Ovary (tissue), 10 donors: ENCODE measurements at regions of chr14 and their contacts with region 1.

Region 1: GRCh38 chr14:21092273-21093011 is 6.0 kb downstream of the ZNF219 start:
- DNase-seq: peak; percentile 73 to 92 (median 89)
- H3K4me3 ChIP-seq: no peak overlapping the region
- H3K27ac ChIP-seq: no peak overlapping the region
- H3K4me1 ChIP-seq: no peaks in the 10 kb centered on the region
- H3K27me3 ChIP-seq: no peaks in the 10 kb centered on the region
- CTCF ChIP-seq: peak; percentile 99 to 100 (median 100)
- EP300 ChIP-seq: no peak
- POLR2A ChIP-seq: peak; percentile 53

Region 2: GRCh38 chr14:21014761-21015190 is 77.7 kb before region 1 on chr14:
- intact Hi-C with region 1: loop called in 1 of 4 experiments (anchors 5 kb)
- DNase-seq: peak; percentile 81 to 92 (median 87)
- H3K4me3 ChIP-seq: no peak overlapping the region
- H3K27ac ChIP-seq: peak overlapping the region in 1 of 2 donors; percentile 16
- H3K4me1 ChIP-seq: peaks cover 5% of the 10 kb centered on the region
- H3K27me3 ChIP-seq: no peaks in the 10 kb centered on the region
- CTCF ChIP-seq: peak; percentile 81 to 97 (median 96)
- EP300 ChIP-seq: no peak
- POLR2A ChIP-seq: no peak

Region 3: DNA sequence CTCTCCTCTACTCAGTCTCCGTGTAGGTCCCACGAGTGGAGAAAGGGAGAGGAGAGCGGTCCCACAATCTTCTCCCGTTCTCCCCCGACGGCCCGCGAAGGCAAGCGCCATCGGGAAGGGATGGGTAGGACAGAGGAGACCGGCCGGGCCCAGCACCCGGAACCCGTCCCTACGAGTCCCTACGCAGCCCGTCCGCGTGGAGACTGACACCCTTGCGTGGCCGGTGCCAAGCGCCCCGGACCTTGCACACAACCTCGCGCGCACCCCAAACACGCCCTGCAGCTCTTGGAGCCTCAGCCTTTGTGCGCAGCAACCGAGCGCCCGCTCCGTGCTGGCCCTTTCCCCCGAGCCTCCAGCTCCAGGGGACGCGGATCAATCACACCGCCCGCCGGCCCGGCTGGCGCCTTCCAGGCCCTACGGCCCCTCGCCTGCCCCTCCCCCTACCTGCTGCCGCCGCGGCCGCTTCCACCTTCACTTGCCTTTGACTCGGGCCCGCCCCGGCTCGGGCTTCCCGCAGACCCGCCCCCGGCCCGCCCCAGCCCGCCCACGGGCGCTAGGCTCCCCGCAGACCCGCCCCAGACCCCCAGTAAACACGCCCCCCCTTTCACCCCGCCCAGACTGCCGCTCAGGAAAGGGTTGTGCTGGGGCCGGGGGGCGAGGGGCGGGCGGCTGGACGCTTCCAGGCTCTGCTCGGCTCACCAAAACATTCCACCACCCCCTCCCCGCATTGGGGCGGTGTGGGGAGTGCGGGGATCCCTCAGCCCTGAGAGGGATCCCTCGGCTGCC is 67.7 kb before region 1 on chr14 and contains the start of gene NDRG2:
- intact Hi-C with region 1: loop called in 2 of 4 experiments (anchors 5 kb)
- DNase-seq: peak; percentile 86 to 93 (median 88)
- H3K4me3 ChIP-seq: peak within 1 kb of the TSS; percentile 93
- H3K27ac ChIP-seq: peak within 1 kb of the TSS; percentile 90 to 97
- H3K4me1 ChIP-seq: peaks cover 9% of the 10 kb centered on the region
- H3K27me3 ChIP-seq: no peaks in the 10 kb centered on the region
- CTCF ChIP-seq: no peak
- EP300 ChIP-seq: no peak
- POLR2A ChIP-seq: no peak
- total RNA-seq, gene NDRG2: 355 to 703 (median 417) TPM

Region 4: GRCh38 chr14:21071225-21072030 is 21.0 kb before region 1 on chr14:
- intact Hi-C with region 1: loop called in 2 of 4 experiments (anchors 2 kb)
- DNase-seq: peak; percentile 85 to 87 (median 86)
- H3K4me3 ChIP-seq: peak overlapping the region; percentile 91
- H3K27ac ChIP-seq: peak overlapping the region; percentile 94 to 95
- H3K4me1 ChIP-seq: peaks cover 1% of the 10 kb centered on the region
- H3K27me3 ChIP-seq: no peaks in the 10 kb centered on the region
- CTCF ChIP-seq: no peak
- EP300 ChIP-seq: no peak
- POLR2A ChIP-seq: no peak